ENCODE measurements at regions of chr5 and their contacts with region 1.

Region 1: GRCh38 chr5:72451741-72452505 is 55.3 kb downstream of the ZNF366 start:
- DNase-seq: peak; percentile 67 to 90 (median 87)
- ATAC-seq: peak; percentile 72 to 86 (median 84)
- H3K4me3 ChIP-seq: peak overlapping the region in 1 of 12 donors; percentile 1
- H3K27ac ChIP-seq: peak overlapping the region; percentile 82 to 99 (median 92)
- H3K4me1 ChIP-seq: peaks cover 16 to 71% (median 60%) of the 10 kb centered on the region in 12 donors
- H3K27me3 ChIP-seq: no peaks in the 10 kb centered on the region
- CTCF ChIP-seq: no peak
- POLR2A ChIP-seq: no peak

Region 2: DNA sequence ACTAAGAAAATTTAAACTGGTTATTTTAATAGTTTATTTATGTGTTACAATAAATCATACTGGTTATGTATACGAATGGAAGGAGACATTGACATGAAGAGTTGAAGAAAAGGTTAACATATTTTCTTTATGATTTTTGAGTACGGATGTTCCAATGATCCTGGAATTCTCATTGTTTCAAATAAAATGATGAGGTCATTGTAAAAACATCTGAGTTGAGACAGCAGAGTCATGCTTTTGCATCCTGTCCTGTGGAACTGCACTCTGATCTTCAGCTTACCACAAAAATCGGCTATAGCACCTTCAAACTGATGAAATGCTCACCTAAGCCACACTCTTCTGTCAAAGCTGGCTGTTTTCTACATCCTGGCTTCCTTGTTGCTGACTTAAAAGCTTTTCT is 63.9 kb before region 1 on chr5:
- intact Hi-C with region 1: loop called in 1 of 10 experiments (anchors 5 kb)
- DNase-seq: no peak
- ATAC-seq: peak in 2 of 4 donors; percentile 34 to 38
- H3K4me3 ChIP-seq: no peak overlapping the region
- H3K27ac ChIP-seq: peak overlapping the region in 6 of 12 donors; percentile 8 to 30 (median 22)
- H3K4me1 ChIP-seq: peaks cover 0 to 62% (median 28%) of the 10 kb centered on the region in 12 donors
- H3K27me3 ChIP-seq: no peaks in the 10 kb centered on the region
- CTCF ChIP-seq: no peak
- POLR2A ChIP-seq: no peak

Region 3: GRCh38 chr5:72434781-72435437 is 17.0 kb before region 1 on chr5:
- intact Hi-C with region 1: loop called in 2 of 10 experiments (anchors 1 to 2 kb)
- DNase-seq: no peak
- ATAC-seq: peak; percentile 66 to 76 (median 70)
- H3K4me3 ChIP-seq: no peak overlapping the region
- H3K27ac ChIP-seq: peak overlapping the region; percentile 35 to 80 (median 62)
- H3K4me1 ChIP-seq: peaks cover 0 to 48% (median 27%) of the 10 kb centered on the region in 12 donors
- H3K27me3 ChIP-seq: no peaks in the 10 kb centered on the region
- CTCF ChIP-seq: no peak
- POLR2A ChIP-seq: no peak

Region 4: DNA sequence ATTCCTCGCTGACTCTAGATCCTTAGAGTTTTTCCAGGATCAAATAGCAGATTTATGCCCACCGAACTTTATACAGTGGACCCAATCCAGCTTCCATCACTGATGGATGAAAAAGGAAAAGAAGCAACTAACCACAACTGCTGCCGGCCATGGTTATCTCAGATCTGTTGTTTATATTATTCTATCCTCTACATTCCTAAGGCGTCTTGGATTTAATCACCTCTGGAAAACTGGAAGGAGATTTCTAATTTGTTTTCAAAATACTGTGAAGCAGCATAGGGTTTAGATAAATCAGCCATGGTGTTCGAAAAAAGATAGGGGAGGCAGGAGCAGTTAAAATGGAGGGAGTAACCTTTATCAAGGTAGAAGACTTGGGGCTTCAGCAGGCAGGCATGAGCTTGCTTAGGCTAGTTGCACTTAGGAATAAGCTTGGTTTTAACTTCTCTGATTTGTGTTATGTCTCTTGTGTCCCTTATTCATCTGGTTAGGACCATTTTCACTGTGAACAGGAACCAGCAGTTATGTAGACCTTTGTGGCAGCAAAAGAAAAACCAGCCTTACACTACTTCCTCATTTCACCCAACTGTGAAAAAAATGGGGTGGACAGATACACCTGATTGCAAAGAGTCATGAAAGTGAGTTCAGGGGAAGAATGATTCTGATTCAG is 56.1 kb after region 1 on chr5:
- intact Hi-C with region 1: loop called in 7 of 10 experiments (anchors 2 to 10 kb)
- DNase-seq: no peak
- ATAC-seq: no peak
- H3K4me3 ChIP-seq: peak overlapping the region in 10 of 12 donors; percentile 21 to 58 (median 44)
- H3K27ac ChIP-seq: peak overlapping the region; percentile 51 to 84 (median 72)
- H3K4me1 ChIP-seq: peaks cover 5 to 79% (median 31%) of the 10 kb centered on the region in 12 donors
- H3K27me3 ChIP-seq: no peaks in the 10 kb centered on the region
- CTCF ChIP-seq: no peak
- POLR2A ChIP-seq: no peak

Region 5: DNA sequence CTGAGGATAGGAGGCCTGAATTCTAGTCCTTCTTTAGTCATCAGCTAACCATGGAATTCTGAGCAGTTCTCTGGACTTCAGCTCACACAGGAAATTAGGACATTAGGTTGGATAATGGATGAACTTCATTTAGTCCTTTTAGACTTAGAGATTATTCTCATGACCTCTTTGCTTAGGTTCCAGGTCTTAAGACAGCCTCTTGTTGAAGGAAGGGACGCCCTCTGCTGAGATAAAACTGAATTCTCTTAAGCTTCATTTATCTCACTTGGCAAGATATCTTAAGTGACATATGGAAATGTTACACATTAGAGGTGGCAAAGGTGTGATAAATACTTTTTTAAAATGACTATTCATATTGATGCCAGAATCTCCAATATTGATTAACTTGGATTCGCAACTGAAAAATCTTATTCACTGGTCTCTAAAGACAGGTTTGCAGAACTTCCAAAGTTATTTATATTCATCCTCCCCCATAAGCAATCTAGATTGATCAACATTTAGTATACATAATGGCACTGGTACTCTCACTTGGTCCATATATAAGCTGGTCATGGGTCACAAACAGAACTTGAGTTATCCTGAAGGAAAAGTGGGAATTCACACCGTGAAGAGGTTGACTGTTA is 72.1 kb after region 1 on chr5:
- intact Hi-C with region 1: loop called in 3 of 10 experiments (anchors 2 to 5 kb)
- DNase-seq: no peak
- ATAC-seq: peak in 3 of 4 donors; percentile 75 to 86 (median 76)
- H3K4me3 ChIP-seq: no peak overlapping the region
- H3K27ac ChIP-seq: peak overlapping the region in 3 of 12 donors; percentile 23 to 45 (median 26)
- H3K4me1 ChIP-seq: peaks cover 0 to 13% (median 3%) of the 10 kb centered on the region in 12 donors
- H3K27me3 ChIP-seq: no peaks in the 10 kb centered on the region
- CTCF ChIP-seq: peak; percentile 55 to 83 (median 72)
- POLR2A ChIP-seq: no peak

Region 6: GRCh38 chr5:72543365-72543764 is 91.4 kb after region 1 on chr5:
- intact Hi-C with region 1: no loop called
- DNase-seq: no peak
- ATAC-seq: no peak
- H3K4me3 ChIP-seq: no peak overlapping the region
- H3K27ac ChIP-seq: no peak overlapping the region
- H3K4me1 ChIP-seq: peaks cover 0 to 3% (median 0%) of the 10 kb centered on the region in 12 donors
- H3K27me3 ChIP-seq: no peaks in the 10 kb centered on the region
- CTCF ChIP-seq: no peak
- POLR2A ChIP-seq: no peak

Measured in heart left ventricle (tissue), 16 donors.